ENCODE measurements at regions of chr20 and their contacts with region 1.

Region 1: DNA sequence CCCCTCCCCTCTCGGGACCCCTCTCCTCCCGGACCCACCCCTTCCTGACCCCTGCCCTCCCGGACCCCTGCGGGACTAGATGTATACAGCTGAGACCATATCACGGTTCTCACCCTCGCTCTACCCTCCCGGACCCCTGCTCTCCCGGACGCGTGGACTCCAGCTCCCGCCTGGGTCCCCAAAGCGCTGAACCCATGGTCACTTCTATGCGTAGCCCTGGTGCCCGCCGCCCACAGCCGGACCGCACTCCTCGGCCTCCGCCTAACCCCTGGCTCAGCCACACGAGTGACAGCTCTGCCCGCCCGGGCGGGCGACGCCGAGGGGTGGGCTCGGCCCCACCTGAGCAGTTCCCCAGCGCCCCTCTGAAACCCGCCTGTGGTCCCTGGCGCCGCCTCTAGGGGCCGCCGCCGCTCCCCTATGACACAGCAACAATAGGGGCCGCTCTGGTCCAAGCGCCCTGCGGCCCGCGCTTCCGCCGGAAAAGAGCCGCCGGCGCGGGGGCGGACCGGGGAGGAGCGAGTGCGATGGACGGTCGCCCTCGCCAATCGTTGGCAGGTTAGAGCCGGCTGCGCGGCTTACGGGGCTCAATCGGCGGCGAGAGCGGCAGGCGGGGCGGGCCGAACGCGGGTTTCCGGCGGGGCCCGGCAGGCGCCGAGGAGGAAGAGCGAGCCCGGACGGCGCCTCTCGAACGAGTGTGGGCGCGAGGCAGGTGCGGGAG is at the start of gene ADRM1:
- DNase-seq: peak; percentile 98
- ATAC-seq: peak; percentile 86
- H3K4me3 ChIP-seq: peak within 1 kb of the TSS; percentile 35 to 88 (median 70)
- H3K4me3 Mint-ChIP-seq: peak within 1 kb of the TSS; percentile 97
- H3K27ac ChIP-seq: peak within 1 kb of the TSS; percentile 73 to 87
- H3K27ac Mint-ChIP-seq: peak within 1 kb of the TSS; percentile 96
- H3K4me1 ChIP-seq: peaks cover 15 to 29% of the 10 kb centered on the region in 2 donors
- H3K4me1 Mint-ChIP-seq: peaks cover 23% of the 10 kb centered on the region
- H3K27me3 ChIP-seq: no peaks in the 10 kb centered on the region
- H3K27me3 Mint-ChIP-seq: no peaks in the 10 kb centered on the region
- CTCF ChIP-seq: peak; percentile 76
- total RNA-seq, gene ADRM1: 64.2 and 73.9 TPM in 2 replicates

Region 2: DNA sequence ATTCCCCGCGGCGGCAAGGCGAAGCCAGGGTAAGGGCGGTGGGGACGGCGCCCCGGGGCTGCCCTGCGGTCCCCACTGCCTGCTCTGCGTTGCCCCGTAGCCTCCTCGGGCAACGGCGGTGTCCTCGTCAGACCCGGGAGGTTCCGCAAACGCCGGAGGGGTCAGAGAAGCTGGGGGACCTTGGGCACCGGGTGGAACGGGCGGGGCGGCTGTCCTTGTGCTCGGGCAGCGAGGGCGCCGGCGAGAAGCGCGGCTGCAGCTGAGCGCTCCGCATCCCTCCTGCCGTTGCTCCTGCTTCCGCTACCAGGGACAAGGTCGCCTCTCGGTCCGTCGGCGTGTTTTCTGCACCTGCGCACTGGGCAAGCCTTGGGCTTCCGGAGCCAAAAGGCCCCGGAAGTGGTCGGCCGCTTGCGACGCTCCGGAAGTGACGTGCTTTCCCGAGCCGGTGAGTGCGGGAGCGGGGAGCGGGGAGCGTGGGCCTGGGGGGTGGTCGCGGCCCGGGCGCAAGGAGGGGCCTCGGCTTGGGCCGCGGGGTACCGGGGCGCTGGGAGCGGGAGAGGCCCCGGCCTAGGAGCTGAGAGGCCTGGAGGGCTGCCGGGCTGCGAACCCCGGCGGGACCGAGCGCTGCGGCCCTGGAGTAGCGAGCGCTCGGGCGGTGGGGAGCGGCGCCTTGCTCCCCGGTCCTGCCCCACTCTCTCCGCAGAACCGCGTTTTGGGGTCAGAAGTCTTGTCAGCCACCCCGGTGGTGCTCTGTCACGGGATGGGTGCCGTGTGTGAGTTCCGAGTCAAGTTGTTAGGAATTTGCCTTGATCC is 119.7 kb before region 1 on chr20 and contains the start of gene MTG2:
- CTCF ChIA-PET with region 1: no interaction called
- POLR2A ChIA-PET with region 1: no interaction called
- intact Hi-C with region 1: loop called (anchors 5 kb)
- DNase-seq: peak; percentile 96
- ATAC-seq: peak; percentile 90
- H3K4me3 ChIP-seq: peak within 1 kb of the TSS; percentile 81 to 88 (median 84)
- H3K4me3 Mint-ChIP-seq: peak within 1 kb of the TSS; percentile 97
- H3K27ac ChIP-seq: peak within 1 kb of the TSS; percentile 86 to 97
- H3K27ac Mint-ChIP-seq: peak within 1 kb of the TSS; percentile 98
- H3K4me1 ChIP-seq: peaks cover 13 to 18% of the 10 kb centered on the region in 2 donors
- H3K4me1 Mint-ChIP-seq: peaks cover 39% of the 10 kb centered on the region
- H3K27me3 ChIP-seq: no peaks in the 10 kb centered on the region
- H3K27me3 Mint-ChIP-seq: no peaks in the 10 kb centered on the region
- CTCF ChIP-seq: no peak
- total RNA-seq, gene MTG2: 47.6 and 48.4 TPM in 2 replicates

Region 3: GRCh38 chr20:62227977-62228958 is 74.2 kb before region 1 on chr20:
- CTCF ChIA-PET with region 1: no interaction called
- POLR2A ChIA-PET with region 1: no interaction called
- intact Hi-C with region 1: no loop called
- DNase-seq: no peak
- ATAC-seq: no peak
- H3K4me3 ChIP-seq: no peak overlapping the region
- H3K4me3 Mint-ChIP-seq: no peak overlapping the region
- H3K27ac ChIP-seq: no peak overlapping the region
- H3K27ac Mint-ChIP-seq: no peak overlapping the region
- H3K4me1 ChIP-seq: no peaks in the 10 kb centered on the region
- H3K4me1 Mint-ChIP-seq: no peaks in the 10 kb centered on the region
- H3K27me3 ChIP-seq: peaks cover 0 to 27% (median 2%) of the 10 kb centered on the region in 4 experiments
- H3K27me3 Mint-ChIP-seq: peaks cover 18% of the 10 kb centered on the region
- CTCF ChIP-seq: no peak

Region 4: GRCh38 chr20:62339647-62340070 is 37.2 kb after region 1 on chr20:
- CTCF ChIA-PET with region 1: interaction called, 7 read pairs
- POLR2A ChIA-PET with region 1: interaction called, 15 read pairs
- intact Hi-C with region 1: loop called (anchors 1 kb)
- DNase-seq: peak; percentile 90
- ATAC-seq: peak; percentile 59
- H3K4me3 ChIP-seq: peak overlapping the region in 4 of 5 experiments; percentile 31 to 68 (median 50)
- H3K4me3 Mint-ChIP-seq: peak overlapping the region; percentile 84
- H3K27ac ChIP-seq: peak overlapping the region; percentile 86 to 87
- H3K27ac Mint-ChIP-seq: peak overlapping the region; percentile 95
- H3K4me1 ChIP-seq: peaks cover 53 to 61% of the 10 kb centered on the region in 2 donors
- H3K4me1 Mint-ChIP-seq: peaks cover 48% of the 10 kb centered on the region
- H3K27me3 ChIP-seq: no peaks in the 10 kb centered on the region
- H3K27me3 Mint-ChIP-seq: no peaks in the 10 kb centered on the region
- CTCF ChIP-seq: no peak

Region 5: GRCh38 chr20:62368976-62369814 is 66.7 kb after region 1 on chr20:
- CTCF ChIA-PET with region 1: interaction called, 11 read pairs
- POLR2A ChIA-PET with region 1: no interaction called
- intact Hi-C with region 1: loop called (anchors 1 kb)
- DNase-seq: peak; percentile 27
- ATAC-seq: no peak
- H3K4me3 ChIP-seq: no peak overlapping the region
- H3K4me3 Mint-ChIP-seq: peak overlapping the region; percentile 80
- H3K27ac ChIP-seq: no peak overlapping the region
- H3K27ac Mint-ChIP-seq: no peak overlapping the region
- H3K4me1 ChIP-seq: peaks cover 25 to 34% of the 10 kb centered on the region in 2 donors
- H3K4me1 Mint-ChIP-seq: peaks cover 19% of the 10 kb centered on the region
- H3K27me3 ChIP-seq: peaks cover 0 to 46% (median 12%) of the 10 kb centered on the region in 4 experiments
- H3K27me3 Mint-ChIP-seq: peaks cover 6% of the 10 kb centered on the region
- CTCF ChIP-seq: peak; percentile 31

Region 6: DNA sequence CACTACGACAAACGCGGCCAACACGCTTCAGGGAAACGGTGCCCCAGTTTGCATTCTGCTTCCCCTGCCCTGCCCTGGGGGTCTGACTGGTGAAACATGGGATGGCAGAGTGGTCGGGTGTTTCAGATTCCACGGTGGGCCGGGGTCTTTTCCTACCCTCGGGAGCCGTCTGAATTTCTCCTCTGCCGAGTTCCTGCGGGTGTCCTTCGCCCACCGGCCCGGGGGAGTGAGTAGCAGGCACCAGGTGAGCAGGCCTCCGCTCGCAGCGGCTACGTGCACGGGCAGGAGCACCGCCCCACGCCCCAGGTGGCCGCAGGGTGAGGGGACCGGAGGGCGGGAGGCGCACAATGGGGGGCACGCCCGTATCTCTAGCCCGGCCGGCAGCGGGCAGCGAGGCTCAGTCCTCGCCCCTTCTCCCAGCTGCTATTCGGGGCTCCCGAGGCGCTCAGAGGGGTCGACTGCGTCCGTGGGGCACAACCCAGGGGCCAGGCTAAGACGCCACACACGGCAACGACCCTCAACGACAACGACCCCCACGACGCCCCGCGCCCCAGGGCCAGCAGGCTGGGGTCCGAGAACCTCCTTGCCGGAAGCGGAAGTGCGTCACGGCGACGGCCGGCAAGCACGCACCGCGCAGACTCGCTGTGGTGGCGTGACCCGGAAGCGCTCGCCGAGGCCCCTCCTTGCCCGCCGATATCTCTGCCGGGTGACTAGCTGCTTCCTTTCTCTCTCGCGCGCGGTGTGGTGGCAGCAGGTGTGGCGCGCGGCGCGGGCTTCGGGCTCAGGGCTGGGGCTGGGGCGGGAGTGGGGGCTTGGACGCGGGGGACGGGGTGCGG is 84.1 kb after region 1 on chr20 and contains the start of gene RPS21:
- CTCF ChIA-PET with region 1: interaction called, 81 read pairs
- POLR2A ChIA-PET with region 1: interaction called, 4 read pairs
- intact Hi-C with region 1: loop called (anchors 1 kb)
- DNase-seq: peak; percentile 95
- ATAC-seq: peak; percentile 87
- H3K4me3 ChIP-seq: peak within 1 kb of the TSS; percentile 78 to 93 (median 91)
- H3K4me3 Mint-ChIP-seq: peak within 1 kb of the TSS; percentile 94
- H3K27ac ChIP-seq: peak within 1 kb of the TSS; percentile 88 to 89
- H3K27ac Mint-ChIP-seq: peak within 1 kb of the TSS; percentile 94
- H3K4me1 ChIP-seq: peaks cover 18 to 34% of the 10 kb centered on the region in 2 donors
- H3K4me1 Mint-ChIP-seq: peaks cover 48% of the 10 kb centered on the region
- H3K27me3 ChIP-seq: no peaks in the 10 kb centered on the region
- H3K27me3 Mint-ChIP-seq: no peaks in the 10 kb centered on the region
- CTCF ChIP-seq: no peak
- total RNA-seq, gene RPS21: 2,429 and 2,653 TPM in 2 replicates

Region 7: DNA sequence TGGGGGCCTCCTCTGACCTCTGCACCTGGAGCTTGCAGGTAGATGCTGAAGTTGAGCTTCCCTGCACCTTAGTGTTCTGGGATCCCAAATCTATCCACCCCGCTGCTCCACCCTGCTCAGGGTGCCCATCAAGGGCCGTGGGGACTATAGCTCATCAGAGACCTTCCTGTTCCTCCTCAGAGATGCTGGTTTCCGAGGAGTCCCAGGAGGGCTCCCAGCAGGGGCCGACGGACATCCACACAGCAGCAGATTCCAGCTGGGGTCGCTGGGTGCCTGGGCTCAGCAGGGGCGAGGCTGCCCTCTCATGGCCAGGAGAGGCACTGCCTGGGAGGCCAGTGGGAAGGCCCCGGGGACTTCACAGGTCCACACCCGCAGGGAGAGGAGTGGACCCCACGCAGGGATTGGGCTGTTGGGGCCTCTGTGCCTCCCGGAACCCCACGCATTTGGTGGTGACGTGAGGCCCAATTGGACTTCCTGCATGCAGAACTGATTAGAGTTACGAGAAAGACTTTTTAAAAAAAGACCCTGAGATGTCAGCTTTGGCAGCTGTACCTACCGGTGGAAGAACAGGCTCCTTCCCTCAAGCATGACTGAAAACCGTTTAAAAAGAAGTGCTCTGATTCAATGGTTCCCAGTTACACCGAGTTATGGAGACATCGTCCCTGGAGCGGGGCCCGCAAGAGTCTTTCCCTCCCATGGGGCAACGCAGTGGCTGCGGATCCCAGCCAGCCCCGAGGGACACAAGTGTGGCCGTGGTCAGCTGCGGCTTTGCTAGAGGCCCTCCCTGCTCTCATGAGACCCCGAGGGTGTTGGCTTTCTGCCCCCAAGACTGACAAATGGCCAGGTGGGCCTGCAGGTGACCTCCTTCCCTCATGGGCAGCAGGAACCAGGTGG is 314.5 kb after region 1 on chr20:
- CTCF ChIA-PET with region 1: interaction called, 5 read pairs
- POLR2A ChIA-PET with region 1: interaction called, 6 read pairs
- intact Hi-C with region 1: loop called (anchors 2 kb)
- DNase-seq: peak; percentile 81
- ATAC-seq: peak; percentile 71
- H3K4me3 ChIP-seq: no peak overlapping the region
- H3K4me3 Mint-ChIP-seq: peak overlapping the region; percentile 83
- H3K27ac ChIP-seq: peak overlapping the region; percentile 54 to 73
- H3K27ac Mint-ChIP-seq: peak overlapping the region; percentile 94
- H3K4me1 ChIP-seq: peaks cover 31 to 33% of the 10 kb centered on the region in 2 donors
- H3K4me1 Mint-ChIP-seq: peaks cover 41% of the 10 kb centered on the region
- H3K27me3 ChIP-seq: no peaks in the 10 kb centered on the region
- H3K27me3 Mint-ChIP-seq: no peaks in the 10 kb centered on the region
- CTCF ChIP-seq: peak; percentile 92

Region 8: DNA sequence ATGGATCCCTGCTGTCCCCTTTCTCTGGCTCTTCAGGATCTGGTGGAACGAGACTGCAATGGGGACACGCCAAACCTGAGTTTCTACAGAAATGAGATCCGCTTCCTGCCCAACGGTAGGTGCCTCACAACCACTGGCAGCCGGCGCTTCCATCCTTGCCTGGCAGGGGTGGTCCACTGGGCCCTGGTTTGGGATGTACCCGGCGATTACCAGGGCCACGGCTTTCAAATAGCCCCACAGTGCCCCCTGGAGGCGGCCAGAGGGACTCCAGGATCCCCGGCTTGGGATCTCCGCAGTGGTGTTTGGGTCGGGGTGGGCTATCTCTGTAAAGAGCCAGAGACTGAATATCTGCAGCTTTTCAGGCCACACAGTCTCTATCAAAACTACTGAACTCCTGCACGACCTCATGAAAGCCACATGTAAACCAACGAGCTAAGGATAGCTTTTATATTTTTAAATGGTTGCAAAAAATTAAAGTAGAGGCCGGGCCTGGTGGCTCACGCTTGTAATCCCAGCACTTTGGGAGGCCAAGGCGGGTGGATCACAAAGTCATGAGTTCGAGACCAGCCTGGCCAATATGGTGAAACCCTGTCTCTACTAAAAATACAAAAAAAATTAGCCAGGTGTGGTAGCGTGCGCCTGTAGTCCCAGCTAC is 505.8 kb after region 1 on chr20:
- CTCF ChIA-PET with region 1: interaction called, 3 read pairs
- POLR2A ChIA-PET with region 1: interaction called, 6 read pairs
- intact Hi-C with region 1: loop called (anchors 5 kb)
- DNase-seq: peak; percentile 81
- ATAC-seq: peak; percentile 50
- H3K4me3 ChIP-seq: no peak overlapping the region
- H3K4me3 Mint-ChIP-seq: peak overlapping the region; percentile 72
- H3K27ac ChIP-seq: no peak overlapping the region
- H3K27ac Mint-ChIP-seq: peak overlapping the region; percentile 86
- H3K4me1 ChIP-seq: peaks cover 17 to 38% of the 10 kb centered on the region in 2 donors
- H3K4me1 Mint-ChIP-seq: peaks cover 33% of the 10 kb centered on the region
- H3K27me3 ChIP-seq: no peaks in the 10 kb centered on the region
- H3K27me3 Mint-ChIP-seq: no peaks in the 10 kb centered on the region
- CTCF ChIP-seq: peak; percentile 93

Measured in B cell (primary cell).